Prostate gland (tissue), 2 donors: ENCODE measurements at regions of chr7 and their contacts with region 1.

Region 1: DNA sequence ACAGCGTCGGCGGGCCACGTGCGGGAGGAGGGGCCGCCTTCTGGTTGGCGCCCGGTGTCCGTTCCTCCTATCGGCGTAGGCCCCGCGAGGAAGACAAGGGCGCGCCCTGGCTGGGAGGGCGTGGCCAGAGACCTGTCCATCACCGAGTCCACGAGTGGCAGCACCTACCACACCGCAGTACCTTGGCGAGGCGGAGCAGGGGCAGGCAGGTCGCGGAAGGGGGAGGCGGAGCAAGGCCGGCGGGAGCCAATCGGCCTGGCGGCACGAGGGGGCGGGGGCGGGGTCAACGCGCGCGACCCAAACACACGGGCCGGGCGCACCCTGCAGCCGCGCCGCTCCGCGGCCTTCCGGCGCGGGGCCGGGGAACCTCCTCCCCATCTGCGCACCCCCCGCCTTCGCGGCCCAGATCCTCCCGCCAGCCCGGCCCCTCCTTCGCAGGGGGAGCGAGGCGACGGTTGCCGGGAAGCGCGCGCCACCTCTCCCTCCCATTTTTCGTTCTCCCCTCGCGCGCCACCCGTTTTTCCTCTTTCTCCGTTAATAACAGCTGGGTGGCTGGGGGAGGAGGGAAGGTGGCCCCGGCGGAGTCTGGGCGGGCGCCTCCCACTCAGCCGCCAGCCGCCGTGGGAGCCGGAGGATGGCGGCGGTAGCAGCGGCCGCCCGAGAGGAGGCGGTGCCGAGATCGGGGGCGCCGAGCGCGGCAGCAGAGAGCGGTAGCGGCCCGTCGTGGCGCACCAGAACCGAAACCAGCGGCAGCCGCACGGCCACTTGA is at the start of gene ZNRF2:
- DNase-seq: peak; percentile 99
- H3K4me3 ChIP-seq: peak within 1 kb of the TSS; percentile 86 to 88
- H3K27ac ChIP-seq: peak within 1 kb of the TSS; percentile 97 to 98
- H3K4me1 ChIP-seq: no peaks in the 10 kb centered on the region
- H3K27me3 ChIP-seq: no peaks in the 10 kb centered on the region
- CTCF ChIP-seq: peak in 2 of 4 experiments; percentile 68 to 70
- POLR2A ChIP-seq: peak; percentile 79
- total RNA-seq, gene ZNRF2: 23.0 to 35.2 TPM

Region 2: DNA sequence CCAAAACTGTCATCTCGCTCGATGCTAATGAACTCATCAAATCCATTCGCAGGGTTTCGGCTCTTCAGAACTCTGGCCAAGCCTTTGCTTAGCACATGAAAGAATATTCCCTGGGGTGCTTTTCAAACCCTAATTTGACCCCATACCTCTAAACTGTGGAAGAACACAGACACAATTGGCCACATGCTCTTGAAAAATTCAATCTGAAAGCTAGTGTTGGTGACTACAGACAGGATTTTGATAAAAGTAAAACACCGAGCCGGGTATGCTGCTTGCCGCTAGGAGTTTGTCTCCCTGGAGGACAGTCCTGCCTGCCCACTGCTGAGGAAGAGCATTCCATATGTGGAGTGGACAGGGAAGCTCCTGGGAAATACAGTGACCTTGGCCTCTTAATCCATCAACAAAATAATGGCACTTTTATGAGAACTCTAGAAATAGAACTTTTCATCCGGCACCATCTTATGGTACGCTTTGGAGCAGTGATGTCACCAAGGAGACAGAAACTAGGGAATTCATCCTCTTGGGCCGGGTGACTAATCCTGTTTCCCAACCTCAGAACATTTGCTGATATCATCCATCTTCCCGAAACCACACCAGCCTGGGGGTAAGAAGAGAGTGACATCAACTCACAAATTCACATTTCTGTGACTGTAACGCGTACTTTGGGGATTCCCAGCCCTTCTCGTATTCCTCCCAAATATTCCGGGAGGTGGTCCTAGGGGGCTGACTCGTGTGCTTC is 115.5 kb before region 1 on chr7:
- intact Hi-C with region 1: loop called (anchors 5 kb)
- DNase-seq: no peak
- H3K4me3 ChIP-seq: no peak overlapping the region
- H3K27ac ChIP-seq: no peak overlapping the region
- H3K4me1 ChIP-seq: peaks cover 18% of the 10 kb centered on the region
- H3K27me3 ChIP-seq: no peaks in the 10 kb centered on the region
- CTCF ChIP-seq: no peak
- POLR2A ChIP-seq: no peak